ENCODE measurements at regions of chr12 and their contacts with region 1.

Region 1: DNA sequence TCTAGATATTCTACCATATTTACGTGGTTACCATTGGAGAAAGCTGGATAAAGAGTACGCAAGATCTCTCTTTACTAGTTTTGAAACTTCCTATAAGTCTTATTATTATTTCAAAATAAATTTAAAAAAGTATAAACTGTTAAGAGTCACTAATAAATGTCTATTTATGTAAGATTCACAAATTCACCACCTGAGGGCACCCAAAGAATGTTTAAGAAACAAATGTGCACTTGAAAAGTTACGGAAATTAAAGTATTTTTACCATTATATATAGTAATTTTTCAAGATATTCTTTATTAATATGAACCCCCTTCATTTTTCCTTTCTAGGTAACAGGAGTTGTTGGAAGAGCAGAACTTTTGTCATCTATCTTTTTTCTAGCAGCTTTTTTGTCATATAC is 11.9 kb downstream of the TMTC3 start:
- DNase-seq: peak in 1 of 2 experiments; percentile 55
- ATAC-seq: no peak
- H3K4me3 ChIP-seq: no peak overlapping the region
- H3K27ac ChIP-seq: no peak overlapping the region
- H3K4me1 ChIP-seq: no peaks in the 10 kb centered on the region
- CTCF ChIP-seq: peak; percentile 73
- EP300 ChIP-seq: no peak
- POLR2A ChIP-seq: no peak
- RAD21 ChIP-seq: peak; percentile 71 to 92

Region 2: GRCh38 chr12:88993651-88994050 is 839.7 kb after region 1 on chr12:
- CTCF ChIA-PET with region 1: interaction called, 32 read pairs
- POLR2A ChIA-PET with region 1: no interaction called
- DNase-seq: peak; percentile 18 to 69
- ATAC-seq: peak in 1 of 2 experiments; percentile 76; a peak in 3 of 6 replicates
- H3K4me3 ChIP-seq: no peak overlapping the region
- H3K27ac ChIP-seq: no peak overlapping the region
- H3K4me1 ChIP-seq: no peaks in the 10 kb centered on the region
- CTCF ChIP-seq: peak; percentile 75
- EP300 ChIP-seq: no peak
- POLR2A ChIP-seq: no peak
- RAD21 ChIP-seq: peak; percentile 91